ENCODE measurements at regions of chr1 and their contacts with region 1.

Region 1: DNA sequence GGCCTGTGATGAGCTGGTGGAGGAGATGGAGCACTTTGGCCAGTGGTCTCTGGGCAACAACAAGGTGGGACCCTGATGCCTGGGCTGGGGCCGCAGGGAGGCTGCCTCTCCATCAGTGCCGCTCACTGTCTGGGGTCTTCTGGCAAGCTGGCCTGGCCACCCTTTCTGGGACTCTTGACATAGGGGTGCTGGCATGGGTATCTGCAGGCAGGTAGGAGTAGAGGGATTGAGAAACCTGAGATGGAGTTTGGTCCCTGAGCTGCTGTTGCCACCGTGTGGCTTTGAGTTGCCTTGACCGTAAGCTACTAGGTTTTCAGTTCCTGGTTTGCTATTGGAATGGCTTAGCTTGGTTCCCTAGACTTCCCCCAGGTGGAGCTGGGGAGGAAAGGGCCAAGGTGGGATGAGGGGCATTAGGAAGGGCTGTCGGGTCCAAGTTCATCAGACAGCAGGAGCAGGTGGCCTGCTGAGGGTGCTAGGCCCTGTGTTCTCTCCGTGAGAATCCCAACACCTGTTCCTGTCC is 13.2 kb upstream of the MFN2 start:
- DNase-seq: no peak
- H3K4me3 ChIP-seq: no peak overlapping the region
- H3K27ac ChIP-seq: no peak overlapping the region
- H3K4me1 ChIP-seq: no peaks in the 10 kb centered on the region
- H3K27me3 ChIP-seq: no peaks in the 10 kb centered on the region
- CTCF ChIP-seq: peak; percentile 8 to 67 (median 40)
- POLR2A ChIP-seq: no peak

Region 2: DNA sequence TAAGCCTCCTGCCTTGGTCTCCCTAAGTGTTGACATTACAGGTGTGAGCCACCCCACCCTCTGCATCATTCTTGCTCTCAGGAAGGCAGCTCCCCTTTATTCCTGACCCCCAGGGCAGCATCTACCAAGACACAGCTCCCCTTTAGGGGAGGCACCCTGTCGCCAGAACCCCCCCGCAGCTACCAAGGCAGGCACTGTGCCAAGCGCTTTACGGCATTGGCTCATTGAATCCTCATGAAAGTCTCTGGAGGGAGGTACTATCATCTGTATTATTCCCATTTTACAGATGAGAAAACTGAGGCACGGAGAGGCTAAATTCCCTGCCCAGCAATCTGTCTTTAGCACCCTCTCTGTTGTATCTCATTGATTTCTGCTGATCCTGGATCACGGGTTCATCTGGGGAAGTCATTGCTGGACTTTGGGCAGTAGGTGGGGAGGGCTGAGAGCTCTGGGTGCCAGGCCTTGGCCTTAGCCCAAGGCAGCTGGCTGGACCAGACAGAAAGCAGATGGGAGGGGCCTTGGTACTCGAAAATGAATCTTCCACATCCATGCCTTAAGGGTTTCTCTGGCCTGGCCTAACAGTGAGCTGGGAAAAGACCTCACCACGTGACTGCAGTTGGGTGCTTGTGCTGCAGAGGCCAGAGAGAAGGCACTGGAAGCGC is 26.7 kb before region 1 on chr1:
- intact Hi-C with region 1: no loop called
- DNase-seq: peak; percentile 40 to 54
- H3K4me3 ChIP-seq: no peak overlapping the region
- H3K27ac ChIP-seq: peak overlapping the region; percentile 48 to 56
- H3K4me1 ChIP-seq: no peaks in the 10 kb centered on the region
- H3K27me3 ChIP-seq: no peaks in the 10 kb centered on the region
- CTCF ChIP-seq: no peak
- POLR2A ChIP-seq: no peak

Region 3: DNA sequence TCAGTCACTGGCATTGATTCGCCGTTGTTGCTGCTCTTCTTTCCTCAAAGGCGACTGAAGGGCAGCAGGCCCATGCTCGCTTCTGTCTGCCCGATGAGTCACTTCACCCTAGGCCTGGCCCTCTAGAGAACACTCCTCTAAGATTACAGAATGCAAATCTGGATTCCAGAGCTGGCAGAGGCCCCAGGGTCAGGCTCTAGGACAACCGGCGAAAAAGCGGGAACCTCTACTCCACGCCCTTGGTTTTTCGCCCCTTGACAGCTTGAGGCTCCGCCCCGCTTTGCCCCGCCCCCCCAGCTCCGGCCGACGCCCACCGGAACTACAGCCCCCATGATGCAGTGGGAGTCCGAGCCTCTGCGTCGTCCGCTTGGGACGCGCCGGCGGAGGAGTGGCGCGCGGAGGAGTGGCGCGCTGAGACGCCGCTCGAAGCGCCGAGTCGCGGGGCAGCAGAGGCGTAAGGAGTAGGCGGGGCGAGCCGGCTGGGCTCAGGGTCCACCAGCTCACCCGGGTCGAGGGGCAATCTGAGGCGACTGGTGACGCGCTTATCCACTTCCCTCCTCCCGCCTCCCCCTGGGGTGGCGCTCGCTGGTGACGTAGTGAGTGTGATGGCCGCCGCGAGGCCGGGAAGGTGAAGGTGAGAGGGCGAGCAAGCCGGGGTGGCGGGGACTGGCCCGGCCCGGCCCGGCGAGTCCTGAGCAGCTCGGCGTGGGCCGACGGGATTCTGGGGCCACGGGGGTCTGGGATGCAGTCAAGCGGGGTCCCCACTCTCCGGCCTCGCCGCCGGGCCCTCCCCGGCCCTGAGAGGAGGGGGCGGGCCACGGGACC is 13.0 kb after region 1 on chr1 and contains the start of gene MFN2:
- intact Hi-C with region 1: loop called (anchors 1 kb)
- DNase-seq: peak; percentile 90 to 93
- H3K4me3 ChIP-seq: peak within 1 kb of the TSS; percentile 96 to 97 (median 97)
- H3K27ac ChIP-seq: peak within 1 kb of the TSS; percentile 94 to 98
- H3K4me1 ChIP-seq: peaks cover 2 to 10% of the 10 kb centered on the region in 2 donors
- H3K27me3 ChIP-seq: no peaks in the 10 kb centered on the region
- CTCF ChIP-seq: no peak
- POLR2A ChIP-seq: no peak
- total RNA-seq, gene MFN2: 51.4 to 64.9 (median 62.1) TPM